ENCODE measurements at regions of chr17 and their contacts with region 1.

Region 1: GRCh38 chr17:34998205-34998604 is 17.9 kb downstream of the LIG3 start:
- DNase-seq: peak; percentile 65
- ATAC-seq: peak; percentile 100
- H3K4me3 Mint-ChIP-seq: no peak overlapping the region
- H3K27ac Mint-ChIP-seq: peak overlapping the region; percentile 66
- H3K4me1 Mint-ChIP-seq: peaks cover 4% of the 10 kb centered on the region
- H3K27me3 Mint-ChIP-seq: no peaks in the 10 kb centered on the region
- CTCF ChIP-seq: no peak

Region 2: GRCh38 chr17:35046740-35047283 is 48.6 kb after region 1 on chr17:
- CTCF ChIA-PET with region 1: no interaction called
- POLR2A ChIA-PET with region 1: no interaction called
- intact Hi-C with region 1: loop called (anchors 5 kb)
- DNase-seq: no peak
- ATAC-seq: peak; percentile 78
- H3K4me3 Mint-ChIP-seq: peak overlapping the region; percentile 58
- H3K27ac Mint-ChIP-seq: peak overlapping the region; percentile 78
- H3K4me1 Mint-ChIP-seq: peaks cover 63% of the 10 kb centered on the region
- H3K27me3 Mint-ChIP-seq: no peaks in the 10 kb centered on the region
- CTCF ChIP-seq: no peak

Region 3: GRCh38 chr17:35141681-35142466 is 143.7 kb after region 1 on chr17 and contains the start of gene NLE1:
- CTCF ChIA-PET with region 1: no interaction called
- POLR2A ChIA-PET with region 1: no interaction called
- intact Hi-C with region 1: loop called (anchors 1 kb)
- DNase-seq: peak; percentile 87
- ATAC-seq: peak; percentile 99
- H3K4me3 Mint-ChIP-seq: peak within 1 kb of the TSS; percentile 87
- H3K27ac Mint-ChIP-seq: peak within 1 kb of the TSS; percentile 59
- H3K4me1 Mint-ChIP-seq: peaks cover 14% of the 10 kb centered on the region
- H3K27me3 Mint-ChIP-seq: peaks cover 1% of the 10 kb centered on the region
- CTCF ChIP-seq: no peak
- total RNA-seq, gene NLE1: 22.1 and 26.3 TPM in 2 replicates